Aorta (tissue), 5 donors: ENCODE measurements at regions of chr6 and their contacts with region 1.

Region 1: DNA sequence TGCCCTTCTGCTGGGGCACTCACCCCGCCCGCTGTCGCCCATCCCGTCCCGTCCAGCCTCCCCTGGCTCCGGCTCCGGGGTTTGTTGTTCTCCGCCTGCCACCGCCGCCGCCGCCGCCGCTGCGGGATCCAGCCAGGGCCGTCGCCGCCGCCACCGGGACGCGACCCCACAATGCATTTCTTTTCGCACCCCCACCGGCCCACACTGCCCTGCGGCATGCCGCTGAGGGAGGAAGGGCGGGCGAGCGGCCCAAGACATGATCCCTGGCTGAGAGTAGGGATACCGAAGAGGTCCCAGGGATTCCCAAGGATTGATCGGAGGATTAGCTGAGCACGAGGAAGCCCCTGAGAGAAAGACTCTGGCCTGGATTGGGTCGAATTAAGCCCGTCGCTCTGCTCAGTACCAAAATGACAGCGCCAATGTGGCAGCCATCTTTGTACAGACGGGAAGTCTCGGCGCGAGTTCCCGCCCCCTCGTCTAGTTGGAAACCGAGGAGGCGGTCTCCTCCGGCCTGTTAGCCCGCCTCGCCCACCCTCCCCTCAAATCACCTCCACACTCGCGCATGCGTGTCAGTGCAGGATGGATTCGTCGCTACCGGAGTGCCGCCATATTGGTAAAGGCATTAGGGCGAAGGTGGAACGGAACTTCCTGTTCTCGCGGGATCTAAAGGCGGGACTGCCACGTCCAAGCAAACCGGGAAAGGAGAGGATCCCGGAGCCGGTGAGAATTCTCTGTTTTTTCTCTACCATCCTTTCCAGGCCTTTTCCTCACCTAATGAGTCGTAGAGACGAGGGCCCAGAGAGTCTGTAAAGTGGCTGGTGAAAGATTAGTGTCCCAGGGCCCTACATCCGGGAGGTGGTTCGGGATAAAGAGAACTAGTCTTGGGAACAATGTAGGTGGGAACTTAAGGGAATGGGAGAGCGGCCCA is at the starts of genes RXRB and SLC39A7:
- DNase-seq: peak; percentile 100
- ATAC-seq: peak; percentile 94
- H3K4me3 ChIP-seq: peak within 1 kb of the TSS; percentile 46 to 72
- H3K27ac ChIP-seq: peak within 1 kb of the TSS; percentile 61 to 64
- H3K4me1 ChIP-seq: no peaks in the 10 kb centered on the region
- H3K27me3 ChIP-seq: no peaks in the 10 kb centered on the region
- total RNA-seq, gene RXRB: 51.6 to 55.4 TPM
- total RNA-seq, gene SLC39A7: 86.9 to 90.3 TPM

Region 2: DNA sequence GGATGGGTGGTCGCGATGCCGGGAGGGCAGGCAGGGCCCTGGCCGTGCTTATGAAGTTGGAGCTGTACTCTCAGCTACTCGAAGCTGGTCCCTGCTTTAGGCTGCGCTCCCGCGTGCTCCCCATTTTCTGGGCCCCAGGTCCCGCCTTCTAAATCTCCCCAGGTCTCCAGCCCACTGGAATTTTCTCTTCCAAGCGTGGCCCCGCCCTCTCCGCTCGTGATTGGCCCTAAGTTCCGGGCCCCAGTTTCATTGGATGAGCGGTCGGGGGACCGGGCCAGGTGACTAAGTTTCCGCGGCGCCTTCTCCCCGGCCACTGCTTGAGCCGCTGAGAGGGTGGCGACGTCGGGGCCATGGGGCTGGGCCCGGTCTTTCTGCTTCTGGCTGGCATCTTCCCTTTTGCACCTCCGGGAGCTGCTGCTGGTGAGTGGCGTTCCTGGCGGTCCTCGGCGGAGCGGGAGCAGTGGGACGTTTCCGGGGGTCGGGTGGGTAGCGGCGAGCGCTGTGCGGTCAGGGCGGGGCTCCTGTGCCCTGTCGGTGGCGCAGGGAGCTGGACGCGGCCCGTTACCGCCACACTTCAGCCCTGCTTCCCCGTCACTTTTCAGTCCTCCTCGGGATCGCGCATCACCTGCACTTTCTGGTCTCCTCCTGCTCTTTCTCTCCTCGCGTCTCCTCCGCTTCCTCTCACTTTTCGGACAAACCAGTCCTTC is 1797.0 kb before region 1 on chr6 and contains the start of gene MICA:
- intact Hi-C with region 1: loop called in 1 of 2 experiments (anchors 10 kb)
- DNase-seq: peak; percentile 94 to 97
- ATAC-seq: peak; percentile 91
- H3K4me3 ChIP-seq: peak within 1 kb of the TSS; percentile 18 to 62
- H3K27ac ChIP-seq: peak within 1 kb of the TSS; percentile 82 to 83
- H3K4me1 ChIP-seq: peaks cover 0 to 2% of the 10 kb centered on the region in 2 donors
- H3K27me3 ChIP-seq: no peaks in the 10 kb centered on the region
- total RNA-seq, gene MICA: 19.8 to 29.2 TPM

Region 3: GRCh38 chr6:32971581-32972352 is 228.7 kb before region 1 on chr6:
- intact Hi-C with region 1: loop called in 1 of 2 experiments (anchors 5 kb)
- DNase-seq: peak; percentile 99 to 100
- ATAC-seq: peak; percentile 83
- H3K4me3 ChIP-seq: peak overlapping the region; percentile 96 to 97
- H3K27ac ChIP-seq: peak overlapping the region; percentile 100
- H3K4me1 ChIP-seq: no peaks in the 10 kb centered on the region
- H3K27me3 ChIP-seq: peaks cover 0 to 2% of the 10 kb centered on the region in 2 donors

Region 4: DNA sequence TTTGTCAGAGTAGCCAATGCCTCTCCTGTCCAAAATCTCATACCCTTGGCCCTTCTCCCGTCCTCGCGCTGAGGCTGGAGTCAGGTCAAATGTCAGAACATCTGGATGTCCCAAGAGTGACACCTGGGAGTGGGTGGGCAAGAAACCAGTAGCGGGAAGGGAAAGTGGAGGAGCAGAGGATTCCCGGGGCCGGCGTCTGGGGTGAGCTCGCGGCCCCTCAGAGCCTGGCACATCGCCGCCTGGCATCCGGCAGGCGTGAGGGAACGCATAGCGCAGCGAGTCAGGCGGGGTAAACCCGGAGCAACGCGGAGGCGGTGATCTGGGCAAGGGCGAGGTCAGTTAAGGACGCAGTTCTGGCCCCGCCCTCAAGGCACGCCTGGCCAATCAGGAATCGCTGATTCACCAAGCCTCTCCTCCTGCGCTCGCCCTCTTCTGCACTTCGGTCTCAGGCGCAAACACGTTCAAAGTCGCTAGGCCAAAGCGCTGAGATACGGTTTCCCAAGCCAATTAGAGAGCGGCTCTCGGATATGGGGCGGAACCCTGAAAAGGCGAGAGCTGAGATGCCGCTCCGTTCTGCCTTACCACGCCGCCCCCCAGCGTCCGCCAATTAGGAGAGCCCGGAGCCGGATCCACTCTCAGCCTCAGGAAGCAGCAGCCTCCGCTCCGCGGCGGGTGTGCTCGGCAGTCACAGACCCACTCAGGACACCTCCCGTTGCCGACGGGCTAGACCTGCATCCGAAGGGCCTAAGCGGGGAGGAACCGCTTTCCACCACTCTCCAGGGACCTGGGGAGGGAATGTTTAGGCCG is 48.6 kb after region 1 on chr6:
- intact Hi-C with region 1: loop called in 1 of 2 experiments (anchors 2 kb)
- DNase-seq: peak; percentile 98
- ATAC-seq: peak; percentile 98
- H3K4me3 ChIP-seq: peak overlapping the region; percentile 44 to 47
- H3K27ac ChIP-seq: peak overlapping the region; percentile 88 to 97
- H3K4me1 ChIP-seq: no peaks in the 10 kb centered on the region
- H3K27me3 ChIP-seq: no peaks in the 10 kb centered on the region

Region 5: GRCh38 chr6:33356295-33356694 is 155.8 kb after region 1 on chr6:
- intact Hi-C with region 1: no loop called
- DNase-seq: no peak
- ATAC-seq: no peak
- H3K4me3 ChIP-seq: no peak overlapping the region
- H3K27ac ChIP-seq: no peak overlapping the region
- H3K4me1 ChIP-seq: no peaks in the 10 kb centered on the region
- H3K27me3 ChIP-seq: no peaks in the 10 kb centered on the region

Region 6: GRCh38 chr6:33454009-33454946 is 253.8 kb after region 1 on chr6 and contains the start of gene ZBTB9:
- intact Hi-C with region 1: loop called in 1 of 2 experiments (anchors 10 kb)
- DNase-seq: peak; percentile 97 to 98
- ATAC-seq: peak; percentile 98
- H3K4me3 ChIP-seq: peak within 1 kb of the TSS; percentile 36 to 48
- H3K27ac ChIP-seq: no peak within 1 kb of the TSS
- H3K4me1 ChIP-seq: no peaks in the 10 kb centered on the region
- H3K27me3 ChIP-seq: no peaks in the 10 kb centered on the region
- total RNA-seq, gene ZBTB9: 3.0 to 4.2 TPM

Region 7: GRCh38 chr6:33633462-33634158 is 433.1 kb after region 1 on chr6:
- intact Hi-C with region 1: no loop called
- DNase-seq: peak; percentile 77 to 90
- ATAC-seq: peak; percentile 82
- H3K4me3 ChIP-seq: no peak overlapping the region
- H3K27ac ChIP-seq: no peak overlapping the region
- H3K4me1 ChIP-seq: no peaks in the 10 kb centered on the region
- H3K27me3 ChIP-seq: no peaks in the 10 kb centered on the region